ENCODE measurements at regions of chr16 and their contacts with region 1.

Region 1: GRCh38 chr16:76766538-76766937 is 424.5 kb upstream of the MON1B start:
- DNase-seq: no peak
- H3K4me3 ChIP-seq: no peak overlapping the region
- H3K4me3 Mint-ChIP-seq: no peak overlapping the region
- H3K27ac ChIP-seq: no peak overlapping the region
- H3K27ac Mint-ChIP-seq: no peak overlapping the region
- H3K4me1 ChIP-seq: no peaks in the 10 kb centered on the region
- H3K4me1 Mint-ChIP-seq: no peaks in the 10 kb centered on the region
- H3K27me3 ChIP-seq: no peaks in the 10 kb centered on the region
- H3K27me3 Mint-ChIP-seq: no peaks in the 10 kb centered on the region
- CTCF ChIP-seq: no peak

Region 2: DNA sequence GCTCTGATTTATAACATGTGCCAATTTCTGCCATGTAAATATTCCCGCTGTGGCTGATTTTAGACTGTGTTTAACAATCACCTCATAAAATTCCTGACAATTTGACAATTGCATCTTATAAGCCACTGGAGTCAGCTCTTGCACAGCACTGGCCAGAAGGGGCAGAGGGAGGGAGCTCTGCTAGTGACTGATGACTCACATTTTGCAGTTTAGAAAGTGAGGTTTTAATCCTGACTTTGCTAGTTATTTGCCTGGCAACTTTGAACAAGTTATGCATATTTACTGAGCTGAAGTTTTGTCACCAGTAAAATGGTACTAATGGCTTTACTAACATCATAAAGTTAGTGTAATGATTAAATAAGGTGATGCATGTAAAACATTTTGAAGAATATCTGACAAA is 37.0 kb before region 1 on chr16:
- intact Hi-C with region 1: no loop called
- DNase-seq: no peak
- H3K4me3 ChIP-seq: no peak overlapping the region
- H3K4me3 Mint-ChIP-seq: no peak overlapping the region
- H3K27ac ChIP-seq: no peak overlapping the region
- H3K27ac Mint-ChIP-seq: no peak overlapping the region
- H3K4me1 ChIP-seq: no peaks in the 10 kb centered on the region
- H3K4me1 Mint-ChIP-seq: no peaks in the 10 kb centered on the region
- H3K27me3 ChIP-seq: no peaks in the 10 kb centered on the region
- H3K27me3 Mint-ChIP-seq: peaks cover 0 to 1% (median 0%) of the 10 kb centered on the region in 3 donors
- CTCF ChIP-seq: no peak

Region 3: DNA sequence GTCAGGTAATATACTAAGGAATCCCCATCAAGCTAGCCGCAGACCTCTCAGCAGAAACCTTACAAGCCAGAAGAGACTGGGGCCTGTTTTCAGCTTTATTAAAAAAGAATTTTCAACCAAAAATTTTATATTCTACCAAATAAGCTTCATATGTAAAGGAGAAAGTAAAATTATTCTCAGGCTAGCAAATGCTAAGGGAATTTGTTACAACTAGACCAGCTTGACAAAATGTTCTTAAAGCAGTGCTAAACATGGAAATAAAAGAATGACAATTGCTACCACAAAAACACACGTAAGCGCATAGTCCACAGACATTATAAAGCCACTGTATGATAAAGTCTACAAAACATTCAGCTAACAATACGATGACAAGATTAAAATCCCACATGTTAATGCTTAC is 24.9 kb before region 1 on chr16:
- intact Hi-C with region 1: no loop called
- DNase-seq: no peak
- H3K4me3 ChIP-seq: no peak overlapping the region
- H3K4me3 Mint-ChIP-seq: no peak overlapping the region
- H3K27ac ChIP-seq: no peak overlapping the region
- H3K27ac Mint-ChIP-seq: no peak overlapping the region
- H3K4me1 ChIP-seq: no peaks in the 10 kb centered on the region
- H3K4me1 Mint-ChIP-seq: no peaks in the 10 kb centered on the region
- H3K27me3 ChIP-seq: no peaks in the 10 kb centered on the region
- H3K27me3 Mint-ChIP-seq: peaks cover 0 to 2% (median 0%) of the 10 kb centered on the region in 3 donors
- CTCF ChIP-seq: no peak

Region 4: DNA sequence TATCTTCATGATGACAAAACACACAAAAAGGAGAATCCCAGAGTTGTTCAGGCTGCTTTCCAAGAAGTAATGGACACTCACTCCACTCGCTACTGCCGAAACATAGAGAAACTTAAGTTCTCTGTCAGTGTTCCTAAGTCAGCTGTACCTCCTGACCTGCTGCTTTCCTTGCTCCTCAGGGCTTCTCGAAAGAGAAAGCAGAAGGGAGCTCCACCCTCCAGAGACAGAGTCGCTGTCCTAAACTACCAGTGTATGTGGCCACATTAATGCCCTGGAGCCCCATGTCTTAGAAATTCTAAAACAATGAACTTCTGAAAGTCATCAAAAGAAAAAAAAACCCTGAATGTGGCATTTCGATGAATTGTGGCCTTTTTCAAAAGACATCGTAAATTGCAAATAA is 33.7 kb after region 1 on chr16:
- intact Hi-C with region 1: loop called in 1 of 2 experiments (anchors 2 kb)
- DNase-seq: no peak
- H3K4me3 ChIP-seq: no peak overlapping the region
- H3K4me3 Mint-ChIP-seq: no peak overlapping the region
- H3K27ac ChIP-seq: no peak overlapping the region
- H3K27ac Mint-ChIP-seq: no peak overlapping the region
- H3K4me1 ChIP-seq: no peaks in the 10 kb centered on the region
- H3K4me1 Mint-ChIP-seq: no peaks in the 10 kb centered on the region
- H3K27me3 ChIP-seq: no peaks in the 10 kb centered on the region
- H3K27me3 Mint-ChIP-seq: peaks cover 0 to 2% (median 0%) of the 10 kb centered on the region in 3 donors
- CTCF ChIP-seq: no peak

Measured in CD14-positive monocyte (primary cell).